CD14-positive monocyte (primary cell): ENCODE measurements at regions of chr2 and their contacts with region 1.

Region 1: DNA sequence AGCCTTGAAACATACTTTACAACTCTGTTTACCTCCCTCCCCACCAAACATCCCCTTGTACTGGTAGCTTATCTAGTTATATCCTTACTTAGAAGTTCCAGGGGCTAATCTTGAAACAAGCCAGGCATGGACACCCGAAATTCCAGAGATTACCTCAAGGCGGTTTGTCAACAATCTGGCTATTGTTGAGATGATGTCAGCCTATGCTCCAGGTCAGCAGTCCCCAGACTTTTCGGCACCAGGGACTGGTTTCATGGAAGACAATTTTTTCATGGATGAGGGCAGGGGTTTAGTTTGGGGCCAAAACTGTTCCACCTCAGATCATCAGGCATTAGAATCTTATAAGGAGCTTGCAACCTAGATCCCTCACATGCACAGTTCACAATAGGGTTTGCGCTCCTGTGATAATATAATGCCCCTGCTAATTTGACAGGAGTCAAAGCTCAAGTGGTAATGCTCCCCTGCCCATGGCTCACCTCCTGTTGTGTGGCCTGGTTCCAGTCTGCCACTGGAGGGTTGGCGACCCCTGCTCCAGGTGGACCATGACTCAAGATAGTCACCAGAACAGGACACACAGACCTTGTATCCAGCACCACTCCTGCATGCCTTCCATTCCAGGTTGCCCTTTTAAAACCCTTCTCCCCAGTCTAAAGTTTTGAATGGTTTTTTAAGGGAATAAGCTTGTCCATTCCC is 171.2 kb downstream of the SPAG16 start:
- DNase-seq: no peak
- H3K4me3 ChIP-seq: no peak overlapping the region
- H3K4me3 Mint-ChIP-seq: no peak overlapping the region
- H3K27ac ChIP-seq: no peak overlapping the region
- H3K27ac Mint-ChIP-seq: no peak overlapping the region
- H3K4me1 ChIP-seq: no peaks in the 10 kb centered on the region
- H3K4me1 Mint-ChIP-seq: no peaks in the 10 kb centered on the region
- H3K27me3 ChIP-seq: no peaks in the 10 kb centered on the region
- H3K27me3 Mint-ChIP-seq: peaks cover 0 to 5% (median 0%) of the 10 kb centered on the region in 3 donors
- CTCF ChIP-seq: no peak

Region 2: DNA sequence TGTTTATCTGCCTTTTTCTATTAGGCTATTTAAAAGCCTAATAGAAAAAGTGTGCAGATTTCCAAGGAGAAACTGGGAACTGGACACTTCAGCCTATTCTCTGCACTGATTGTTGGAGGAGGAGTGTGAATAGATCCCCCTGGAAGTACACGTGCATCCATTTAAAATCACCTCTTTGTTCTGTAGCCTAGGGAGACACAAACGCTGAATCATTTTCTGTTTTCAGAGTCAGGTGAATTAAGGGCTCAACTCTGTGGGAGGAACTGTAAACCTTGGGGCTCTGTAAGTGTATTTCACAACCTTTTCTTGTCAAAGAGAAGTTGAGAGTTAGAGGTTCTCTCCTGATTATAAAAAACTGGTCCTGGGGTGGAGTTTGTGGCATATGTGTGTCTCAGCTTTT is 11.5 kb before region 1 on chr2:
- intact Hi-C with region 1: loop called in 1 of 2 experiments (anchors 2 kb)
- DNase-seq: no peak
- H3K4me3 ChIP-seq: no peak overlapping the region
- H3K4me3 Mint-ChIP-seq: no peak overlapping the region
- H3K27ac ChIP-seq: no peak overlapping the region
- H3K27ac Mint-ChIP-seq: no peak overlapping the region
- H3K4me1 ChIP-seq: no peaks in the 10 kb centered on the region
- H3K4me1 Mint-ChIP-seq: no peaks in the 10 kb centered on the region
- H3K27me3 ChIP-seq: no peaks in the 10 kb centered on the region
- H3K27me3 Mint-ChIP-seq: no peaks in the 10 kb centered on the region
- CTCF ChIP-seq: no peak